BJ (cell line): ENCODE measurements at regions of chr2 and their contacts with region 1.

Region 1: DNA sequence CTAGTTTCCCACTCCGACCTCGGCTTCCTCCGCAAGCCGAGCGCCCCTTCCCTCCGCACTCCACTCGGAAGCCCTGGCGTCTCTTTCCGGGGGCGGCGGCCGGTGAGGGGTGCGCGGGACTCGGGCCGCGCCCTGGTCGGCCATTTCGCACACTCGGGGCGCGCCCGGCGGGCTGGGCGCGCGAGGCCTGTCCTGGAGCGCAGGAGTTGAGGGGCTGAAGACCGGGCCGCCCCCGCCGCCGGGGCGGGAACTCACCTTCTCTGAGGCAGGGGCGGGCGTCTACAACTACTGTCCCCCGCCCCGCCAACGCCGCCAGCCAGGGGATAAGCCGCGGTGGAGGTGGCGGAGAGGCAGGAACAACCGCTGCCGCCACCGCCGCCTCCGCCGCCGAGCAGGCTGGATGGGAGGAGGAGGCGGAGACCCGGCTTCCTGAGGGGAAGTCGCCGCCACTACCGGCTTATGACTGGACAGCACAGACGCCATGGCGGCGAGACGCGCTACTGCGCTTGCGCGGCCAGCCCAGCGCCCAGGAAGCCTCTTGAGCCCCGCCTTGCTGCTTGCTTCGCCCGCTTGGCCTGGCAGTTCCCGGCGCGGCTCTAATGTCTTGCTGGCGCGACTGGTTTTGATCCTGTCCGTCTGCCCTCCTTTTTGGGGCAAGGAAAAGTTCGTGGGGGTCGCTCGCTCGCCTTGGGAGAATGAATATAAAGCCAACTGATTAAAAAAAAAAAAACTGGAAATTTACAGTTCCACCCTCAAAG is at the start of gene KRCC1:
- DNase-seq: peak; percentile 82
- H3K4me3 ChIP-seq: peak within 1 kb of the TSS; percentile 63
- H3K27me3 ChIP-seq: no peaks in the 10 kb centered on the region
- CTCF ChIP-seq: no peak
- polyA plus RNA-seq, gene KRCC1: 16.8 and 33.7 TPM in 2 replicates

Region 2: DNA sequence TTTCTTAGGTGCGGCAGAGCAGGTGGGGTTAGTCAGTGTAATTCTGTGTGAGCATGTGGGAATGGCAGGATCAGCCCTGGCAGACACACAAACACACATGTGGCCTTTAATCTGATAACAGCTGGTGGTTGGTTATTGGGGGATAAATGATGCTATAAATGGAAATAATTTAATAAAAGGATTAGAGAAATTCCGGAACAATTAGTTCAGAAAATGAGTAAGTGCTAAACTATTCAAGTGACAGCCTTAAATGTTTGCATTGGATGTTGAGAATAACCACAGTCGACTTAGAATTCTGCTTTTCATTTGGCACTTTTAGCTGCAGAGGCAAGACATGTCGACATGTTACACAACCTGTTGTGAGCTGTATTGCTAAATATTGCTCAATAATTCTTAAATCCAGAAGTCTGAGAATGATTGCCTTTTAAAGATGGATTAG is 19.3 kb after region 1 on chr2:
- CTCF ChIA-PET with region 1: interaction called, 26 read pairs
- POLR2A ChIA-PET with region 1: no interaction called
- DNase-seq: peak; percentile 62
- H3K4me3 ChIP-seq: no peak overlapping the region
- H3K27me3 ChIP-seq: peaks cover 6% of the 10 kb centered on the region; the same call in 1 of the 2 replicates
- CTCF ChIP-seq: no peak

Region 3: DNA sequence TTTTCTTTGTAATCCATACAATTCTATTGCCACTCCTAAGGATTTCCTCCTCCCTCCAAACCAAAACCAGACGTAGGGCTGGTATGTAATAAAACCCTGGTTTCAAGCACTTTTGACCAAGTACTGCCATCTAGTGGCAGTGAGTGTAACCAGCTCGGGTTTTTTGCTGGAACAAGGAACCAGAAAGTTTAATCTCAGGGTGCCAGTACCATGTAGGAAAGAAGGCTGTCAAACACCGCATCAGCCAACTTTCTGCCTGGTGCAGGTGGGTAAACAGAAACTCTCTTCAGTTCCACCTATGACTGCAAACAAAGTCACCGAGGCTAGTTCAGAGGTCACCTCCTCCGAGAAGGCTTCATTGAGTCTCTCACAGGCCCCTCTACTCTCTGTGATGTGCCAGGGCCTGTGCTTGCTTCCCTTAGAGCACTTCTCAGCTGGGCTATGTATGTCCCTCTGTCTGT is 104.4 kb after region 1 on chr2:
- CTCF ChIA-PET with region 1: interaction called, 159 read pairs
- POLR2A ChIA-PET with region 1: interaction called, 3 read pairs
- DNase-seq: no peak
- H3K4me3 ChIP-seq: no peak overlapping the region
- H3K27me3 ChIP-seq: no peaks in the 10 kb centered on the region; the same call in 1 of the 2 replicates
- CTCF ChIP-seq: peak; percentile 80

Region 4: DNA sequence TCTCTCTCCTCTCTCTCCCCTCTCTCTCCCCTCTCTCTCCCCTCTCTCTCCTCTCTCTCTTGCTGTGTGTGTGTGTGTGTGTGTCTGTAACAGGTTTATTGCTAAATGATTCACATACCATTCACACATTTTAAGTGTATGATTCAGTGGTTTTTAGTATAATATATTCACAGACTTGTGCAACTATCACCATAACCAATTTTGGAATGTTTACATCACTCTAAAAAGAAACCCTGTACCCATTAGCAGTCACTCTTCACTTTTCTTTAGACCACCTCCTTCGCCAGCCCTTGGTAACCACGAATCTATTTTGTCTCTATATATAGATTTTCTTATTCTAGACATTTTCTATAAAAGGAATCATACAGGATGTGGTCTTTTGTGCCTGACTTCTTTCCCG is 126.0 kb after region 1 on chr2:
- CTCF ChIA-PET with region 1: interaction called, 56 read pairs
- POLR2A ChIA-PET with region 1: no interaction called
- DNase-seq: peak; percentile 19
- H3K4me3 ChIP-seq: no peak overlapping the region
- H3K27me3 ChIP-seq: no peaks in the 10 kb centered on the region
- CTCF ChIP-seq: no peak

Region 5: DNA sequence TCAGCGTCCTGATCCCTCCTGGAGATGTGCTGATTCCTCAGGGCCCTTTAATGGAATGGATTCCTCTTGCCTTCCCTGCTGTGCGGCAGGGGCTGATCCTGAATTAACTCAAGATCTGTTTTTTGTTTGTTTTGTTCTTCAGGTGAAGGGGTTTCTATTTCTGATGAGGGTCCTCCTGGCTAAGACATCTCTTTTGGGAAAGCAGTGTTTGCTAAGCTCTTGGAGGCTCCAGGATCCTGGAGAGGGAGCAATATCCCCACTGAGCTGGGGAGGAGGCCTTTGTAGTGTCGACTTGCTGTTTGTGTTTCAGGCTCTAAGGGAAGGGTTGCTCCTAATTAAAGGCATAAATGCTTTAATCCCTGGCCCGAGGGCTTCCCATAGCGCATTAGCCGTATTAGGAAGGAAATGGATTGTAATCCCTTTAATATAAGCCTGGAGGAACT is 462.2 kb after region 1 on chr2:
- CTCF ChIA-PET with region 1: no interaction called
- POLR2A ChIA-PET with region 1: no interaction called
- DNase-seq: no peak
- H3K4me3 ChIP-seq: no peak overlapping the region
- H3K27me3 ChIP-seq: no peaks in the 10 kb centered on the region; the same call in 1 of the 2 replicates
- CTCF ChIP-seq: no peak